ENCODE measurements at regions of chr20 and their contacts with region 1.

Region 1: DNA sequence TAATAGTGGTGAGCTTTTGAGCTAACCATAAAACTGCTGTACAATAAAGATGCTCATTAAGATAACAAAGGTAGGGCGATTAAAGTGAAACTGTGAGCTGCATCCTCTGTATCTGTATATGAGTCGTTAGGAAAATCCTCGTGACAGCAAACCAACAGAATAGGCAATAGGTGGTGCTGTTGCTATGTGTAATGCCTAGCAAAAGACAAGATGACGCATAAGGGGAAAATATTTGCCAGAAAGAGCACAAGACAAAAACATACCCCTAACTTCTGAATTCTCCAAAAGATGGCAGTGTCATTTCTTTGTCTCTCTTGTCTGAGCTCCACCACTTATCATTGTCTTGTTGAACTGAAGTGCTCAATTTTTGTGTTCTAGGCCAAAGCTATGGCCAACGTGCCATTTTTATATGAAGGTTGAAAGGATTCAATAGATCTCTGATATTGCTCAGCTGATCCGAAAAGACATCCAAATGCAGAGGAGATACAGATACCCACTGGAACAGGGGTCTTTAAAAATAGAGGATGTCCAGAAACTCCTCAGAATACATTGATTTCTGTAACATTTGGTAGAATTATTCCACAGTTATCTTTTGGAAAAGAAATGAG is 56.3 kb upstream of the ANKEF1 start:
- DNase-seq: peak; percentile 20
- H3K4me3 Mint-ChIP-seq: no peak overlapping the region
- H3K27ac Mint-ChIP-seq: no peak overlapping the region
- H3K4me1 Mint-ChIP-seq: peaks cover 6% of the 10 kb centered on the region
- H3K27me3 Mint-ChIP-seq: peaks cover 9% of the 10 kb centered on the region

Region 2: DNA sequence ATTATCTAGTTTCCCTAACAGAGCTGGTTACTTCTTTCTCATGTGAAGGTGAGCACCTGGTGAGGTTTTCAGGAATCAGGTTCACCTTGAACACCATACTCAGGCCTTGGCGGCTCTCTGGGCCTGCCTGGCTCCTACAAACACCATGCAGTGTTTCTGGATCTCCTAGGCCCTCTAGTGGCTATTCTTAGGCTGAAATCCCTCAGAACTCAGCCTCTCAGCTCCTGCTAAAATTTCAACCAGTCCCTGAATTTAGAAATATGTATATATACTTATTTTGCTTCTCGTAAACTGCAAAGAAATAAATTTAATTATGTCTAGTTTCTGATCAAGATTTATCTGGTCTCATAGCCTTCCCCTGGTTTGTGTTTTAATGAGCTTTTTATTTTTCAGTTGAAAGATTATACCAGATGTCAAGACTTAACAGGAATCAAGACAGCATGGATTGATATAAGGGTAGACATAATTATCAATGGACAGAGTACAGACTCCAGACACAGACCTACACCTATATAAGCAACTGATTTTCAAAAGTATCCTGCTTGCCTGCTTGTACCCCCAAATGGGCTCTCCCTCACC is 112.2 kb after region 1 on chr20:
- intact Hi-C with region 1: loop called (anchors 1 kb)
- DNase-seq: no peak
- H3K4me3 Mint-ChIP-seq: no peak overlapping the region
- H3K27ac Mint-ChIP-seq: no peak overlapping the region
- H3K4me1 Mint-ChIP-seq: no peaks in the 10 kb centered on the region
- H3K27me3 Mint-ChIP-seq: no peaks in the 10 kb centered on the region

Region 3: DNA sequence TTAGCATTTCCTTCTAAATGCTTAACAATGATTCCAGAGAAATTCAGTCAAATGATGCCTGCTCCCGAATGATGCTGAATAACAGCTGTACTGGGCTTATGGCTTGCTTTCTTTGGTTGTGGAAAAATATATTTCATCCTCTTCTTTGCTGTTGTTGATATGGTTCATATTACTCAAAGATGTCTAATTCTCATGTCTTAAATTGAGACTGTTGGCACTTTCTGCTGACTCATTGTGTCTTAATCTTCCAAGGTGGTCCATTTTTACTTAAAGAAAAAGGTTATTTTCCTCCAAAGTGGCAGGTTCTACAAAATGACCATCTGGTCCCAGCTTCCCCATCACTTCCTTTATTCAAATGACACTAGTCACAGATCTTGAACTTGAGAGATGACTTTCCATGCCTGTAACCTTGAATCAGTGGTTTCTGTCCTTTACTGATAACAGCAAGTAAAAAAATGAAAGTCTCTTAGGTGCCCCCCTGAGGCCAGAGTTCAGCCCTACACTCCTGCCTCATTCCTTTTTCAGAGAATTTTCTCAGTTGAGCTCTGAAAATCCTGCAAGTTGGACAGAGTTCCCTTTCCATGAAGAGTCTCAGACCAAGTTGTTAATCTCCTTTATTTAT is 247.0 kb after region 1 on chr20:
- intact Hi-C with region 1: loop called (anchors 1 kb)
- DNase-seq: no peak
- H3K4me3 Mint-ChIP-seq: no peak overlapping the region
- H3K27ac Mint-ChIP-seq: peak overlapping the region; percentile 48
- H3K4me1 Mint-ChIP-seq: peaks cover 15% of the 10 kb centered on the region
- H3K27me3 Mint-ChIP-seq: no peaks in the 10 kb centered on the region

Region 4: GRCh38 chr20:10282979-10283456 is 304.5 kb after region 1 on chr20:
- intact Hi-C with region 1: no loop called
- DNase-seq: no peak
- H3K4me3 Mint-ChIP-seq: no peak overlapping the region
- H3K27ac Mint-ChIP-seq: no peak overlapping the region
- H3K4me1 Mint-ChIP-seq: peaks cover 3% of the 10 kb centered on the region
- H3K27me3 Mint-ChIP-seq: peaks cover 2% of the 10 kb centered on the region

Region 5: DNA sequence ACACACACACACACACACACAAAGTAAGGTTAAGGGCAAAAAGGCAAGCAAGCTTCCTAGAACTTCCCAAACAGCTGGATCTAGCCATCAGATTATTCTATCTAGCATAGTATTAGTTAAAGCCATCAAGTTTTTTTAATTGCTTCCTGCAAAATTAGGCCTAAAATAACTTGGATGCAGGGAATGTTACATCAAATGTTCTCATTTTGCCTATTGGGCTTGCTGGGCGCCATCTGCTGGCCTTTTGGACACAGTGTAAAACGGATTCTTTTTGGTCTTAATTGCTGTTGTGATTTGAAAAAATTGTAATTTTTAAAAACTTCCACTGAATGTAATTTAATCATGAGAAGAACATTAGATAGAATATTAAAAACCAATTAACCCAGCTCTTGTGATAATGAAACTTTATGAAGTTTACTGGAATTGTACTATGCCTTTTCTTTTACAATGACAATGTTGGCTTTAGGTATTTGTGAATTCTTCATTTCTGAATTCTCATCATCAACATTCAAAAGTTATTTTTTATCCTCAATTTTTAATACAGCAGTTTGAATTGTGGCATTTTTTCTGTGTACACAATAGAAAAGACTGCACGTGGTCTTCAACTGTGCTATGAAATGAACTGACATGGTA is 448.7 kb after region 1 on chr20:
- intact Hi-C with region 1: loop called (anchors 1 kb)
- DNase-seq: no peak
- H3K4me3 Mint-ChIP-seq: no peak overlapping the region
- H3K27ac Mint-ChIP-seq: no peak overlapping the region
- H3K4me1 Mint-ChIP-seq: peaks cover 42% of the 10 kb centered on the region
- H3K27me3 Mint-ChIP-seq: no peaks in the 10 kb centered on the region

Region 6: GRCh38 chr20:10553326-10553984 is 575.0 kb after region 1 on chr20:
- intact Hi-C with region 1: loop called (anchors 5 kb)
- DNase-seq: no peak
- H3K4me3 Mint-ChIP-seq: no peak overlapping the region
- H3K27ac Mint-ChIP-seq: no peak overlapping the region
- H3K4me1 Mint-ChIP-seq: peaks cover 43% of the 10 kb centered on the region
- H3K27me3 Mint-ChIP-seq: peaks cover 7% of the 10 kb centered on the region